ENCODE measurements at regions of chr5 and their contacts with region 1.

Region 1: GRCh38 chr5:160342403-160342941 is 28.0 kb downstream of the C1QTNF2 start:
- DNase-seq: no peak
- ATAC-seq: no peak
- H3K4me3 ChIP-seq: no peak overlapping the region
- H3K27ac ChIP-seq: peak overlapping the region in 1 of 2 experiments; percentile 39; a peak in 2 of 6 replicates
- H3K4me1 ChIP-seq: peaks cover 15% of the 10 kb centered on the region
- CTCF ChIP-seq: no peak
- EP300 ChIP-seq: no peak
- POLR2A ChIP-seq: no peak
- RAD21 ChIP-seq: no peak

Region 2: DNA sequence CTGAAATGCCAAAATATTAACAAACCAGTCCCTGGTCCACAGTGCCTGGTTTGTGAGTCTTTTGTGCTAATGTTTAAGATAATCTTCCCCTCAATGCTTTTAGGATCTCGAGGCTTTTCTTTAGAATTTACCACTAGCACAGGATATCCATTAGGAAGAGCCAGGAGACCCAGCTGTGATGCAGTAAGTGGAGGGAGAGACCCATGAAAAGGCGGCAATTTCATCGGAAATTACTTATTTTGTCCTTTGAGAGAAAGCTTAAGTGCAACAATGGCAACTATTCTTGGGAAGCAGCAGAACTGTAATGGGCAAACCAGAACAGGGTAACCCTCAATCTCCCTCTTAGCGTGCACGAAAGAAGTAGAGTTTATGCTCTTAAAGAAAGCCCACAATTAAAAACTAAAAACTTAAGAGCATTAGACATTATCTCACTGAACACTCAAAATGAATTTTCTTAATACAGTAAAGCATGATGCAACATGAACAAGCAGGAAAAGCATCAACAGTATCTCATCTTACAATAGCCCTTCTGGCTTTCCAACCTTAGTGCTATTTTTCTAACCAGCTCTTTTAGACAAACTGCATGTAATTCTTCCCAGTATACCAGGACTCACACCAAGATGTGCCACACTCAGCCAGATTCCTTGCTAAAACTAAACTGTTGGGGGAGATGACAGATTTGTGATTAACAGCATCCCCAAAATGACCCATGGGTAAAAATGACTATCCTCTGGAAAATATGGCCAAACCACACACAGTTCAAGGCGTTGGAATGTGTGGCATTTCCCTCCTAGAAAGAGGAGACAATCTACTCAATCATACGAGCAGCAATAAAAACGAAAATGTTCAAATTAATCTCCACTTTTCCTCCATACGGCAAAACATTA is 259.6 kb before region 1 on chr5:
- CTCF ChIA-PET with region 1: interaction called, 37 read pairs
- POLR2A ChIA-PET with region 1: no interaction called
- DNase-seq: peak in 1 of 2 experiments; percentile 42
- ATAC-seq: peak; percentile 33 to 78; a peak in 5 of 6 replicates
- H3K4me3 ChIP-seq: no peak overlapping the region
- H3K27ac ChIP-seq: peak overlapping the region; percentile 46 to 77
- H3K4me1 ChIP-seq: peaks cover 28% of the 10 kb centered on the region
- CTCF ChIP-seq: no peak
- EP300 ChIP-seq: no peak
- POLR2A ChIP-seq: no peak
- RAD21 ChIP-seq: no peak

Region 3: DNA sequence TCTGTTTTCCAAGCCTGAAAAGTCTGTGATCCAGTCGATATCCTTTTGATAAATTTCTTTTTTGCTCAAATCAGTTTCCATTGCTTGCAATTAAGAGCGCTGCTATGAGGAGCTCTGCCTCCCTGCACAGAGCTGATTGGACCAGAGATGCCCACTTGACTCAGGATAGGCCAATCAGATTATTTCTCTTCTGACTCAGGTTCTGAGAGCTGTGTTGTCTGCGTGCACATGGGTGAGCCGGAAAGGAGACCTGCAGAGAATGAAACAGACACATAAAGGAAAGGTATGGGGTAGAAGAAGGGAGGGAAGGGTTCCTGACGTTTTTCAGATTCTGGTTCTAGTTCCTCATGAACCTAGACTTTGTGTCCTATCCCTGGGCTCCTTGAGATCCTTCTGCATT is 128.9 kb before region 1 on chr5:
- CTCF ChIA-PET with region 1: interaction called, 26 read pairs
- POLR2A ChIA-PET with region 1: no interaction called
- DNase-seq: peak; percentile 13 to 48
- ATAC-seq: peak; percentile 73 to 90; a peak in 4 of 6 replicates
- H3K4me3 ChIP-seq: no peak overlapping the region
- H3K27ac ChIP-seq: no peak overlapping the region
- H3K4me1 ChIP-seq: no peaks in the 10 kb centered on the region
- CTCF ChIP-seq: no peak
- EP300 ChIP-seq: no peak
- POLR2A ChIP-seq: no peak
- RAD21 ChIP-seq: no peak

Region 4: DNA sequence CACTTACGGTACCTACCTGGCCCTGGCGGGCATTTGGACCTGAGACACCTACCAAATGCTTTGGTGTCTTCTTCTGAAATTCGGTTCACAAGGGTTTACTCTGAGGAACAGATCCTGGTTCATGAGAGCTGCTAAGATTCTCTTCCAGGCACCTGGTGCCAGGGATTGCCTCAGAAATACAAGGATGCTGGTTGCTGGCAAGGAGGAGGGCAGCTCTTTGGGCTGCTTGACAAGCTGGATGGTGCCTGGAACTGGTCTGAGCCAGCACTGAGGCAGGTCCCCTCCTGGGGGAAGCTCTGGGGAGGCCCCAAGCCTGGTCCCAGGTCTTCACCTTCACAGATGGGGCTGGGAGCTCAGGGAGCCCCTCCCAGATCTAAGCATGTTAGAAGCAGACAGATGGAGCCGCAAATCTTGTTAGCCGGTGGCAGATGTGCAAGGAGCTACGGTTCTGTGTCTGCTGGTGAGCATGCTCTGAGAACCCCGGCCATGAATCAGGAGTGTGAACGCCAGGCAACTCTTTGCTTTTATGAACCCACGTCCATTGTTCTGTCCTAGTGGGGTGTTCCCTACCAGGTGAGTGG is 96.9 kb before region 1 on chr5:
- CTCF ChIA-PET with region 1: interaction called, 128 read pairs
- POLR2A ChIA-PET with region 1: interaction called, 3 read pairs
- DNase-seq: no peak
- ATAC-seq: 0 out of 6 replicates have a peak, but pooled peaks of 1 of the 2 experiments have one; percentile 31
- H3K4me3 ChIP-seq: no peak overlapping the region
- H3K27ac ChIP-seq: no peak overlapping the region
- H3K4me1 ChIP-seq: no peaks in the 10 kb centered on the region
- CTCF ChIP-seq: no peak
- EP300 ChIP-seq: no peak
- POLR2A ChIP-seq: no peak
- RAD21 ChIP-seq: no peak

Region 5: DNA sequence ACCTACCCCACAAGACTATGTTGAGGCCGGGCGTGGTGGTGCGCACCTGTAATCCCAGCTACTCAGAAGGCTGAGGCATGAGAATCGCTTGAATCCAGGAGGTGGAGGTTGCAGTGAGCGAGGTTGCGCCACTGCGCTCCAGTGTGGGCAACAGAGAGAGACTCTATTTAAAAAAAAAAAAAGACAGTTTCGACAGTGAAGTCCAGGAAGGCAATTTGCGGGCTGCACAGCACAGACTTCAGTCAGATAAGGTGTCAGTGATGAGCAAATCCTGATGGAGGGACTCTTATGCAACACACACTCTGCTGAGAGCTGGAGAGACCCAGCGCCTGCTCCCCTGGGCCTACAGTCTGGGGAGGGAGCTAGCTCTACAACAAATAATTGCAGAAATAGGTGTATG is 44.3 kb before region 1 on chr5:
- CTCF ChIA-PET with region 1: interaction called, 11 read pairs
- POLR2A ChIA-PET with region 1: no interaction called
- DNase-seq: no peak
- ATAC-seq: no peak
- H3K4me3 ChIP-seq: no peak overlapping the region
- H3K27ac ChIP-seq: no peak overlapping the region
- H3K4me1 ChIP-seq: no peaks in the 10 kb centered on the region
- CTCF ChIP-seq: no peak
- EP300 ChIP-seq: no peak
- POLR2A ChIP-seq: no peak
- RAD21 ChIP-seq: no peak

Region 6: GRCh38 chr5:160357861-160358411 is 15.5 kb after region 1 on chr5:
- CTCF ChIA-PET with region 1: interaction called, 22 read pairs
- POLR2A ChIA-PET with region 1: no interaction called
- DNase-seq: no peak
- ATAC-seq: no peak
- H3K4me3 ChIP-seq: no peak overlapping the region
- H3K27ac ChIP-seq: no peak overlapping the region
- H3K4me1 ChIP-seq: no peaks in the 10 kb centered on the region
- CTCF ChIP-seq: no peak
- EP300 ChIP-seq: no peak
- POLR2A ChIP-seq: no peak
- RAD21 ChIP-seq: no peak

Region 7: DNA sequence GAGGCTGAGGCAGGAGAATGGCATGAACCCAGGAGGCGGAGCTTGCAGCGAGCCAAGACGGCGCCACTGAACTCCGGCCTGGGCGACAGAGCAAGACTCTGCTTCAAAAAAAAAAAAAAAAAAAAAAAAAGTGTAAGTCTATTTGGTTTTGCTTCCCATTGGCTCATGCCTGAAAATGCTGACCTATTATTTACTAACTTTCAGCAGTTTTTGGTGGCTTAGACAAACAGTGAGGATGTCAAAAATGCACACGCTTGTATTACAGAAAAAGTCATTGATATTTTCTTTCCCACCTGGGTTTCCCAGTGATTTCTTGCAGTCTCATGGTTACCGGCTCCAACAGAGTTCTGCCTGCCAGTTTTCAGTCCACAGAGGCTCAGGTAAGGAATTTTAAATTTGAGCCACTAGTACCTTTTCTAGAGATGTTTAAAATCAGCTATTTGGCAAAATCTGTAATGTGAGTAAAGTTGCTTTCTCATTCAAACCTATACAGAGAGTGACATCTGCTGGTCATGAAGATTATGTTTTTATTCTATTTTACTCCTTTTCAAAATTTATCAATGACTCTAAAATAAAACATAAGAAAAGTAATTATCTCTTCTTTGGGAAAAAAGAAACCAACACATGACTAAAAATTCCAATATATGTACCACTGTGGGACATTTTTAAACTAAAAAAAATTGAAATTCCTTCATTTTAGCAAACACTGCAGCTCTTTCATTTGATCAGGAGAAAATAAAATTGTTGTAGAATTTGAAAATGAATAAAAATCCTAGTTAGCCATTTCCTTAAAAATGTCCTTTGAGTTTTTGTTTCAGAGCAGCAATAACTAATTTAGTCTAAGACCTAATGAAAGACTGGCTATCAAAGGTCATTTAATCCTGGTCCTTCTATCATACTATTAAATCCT is 48.6 kb after region 1 on chr5:
- CTCF ChIA-PET with region 1: interaction called, 30 read pairs
- POLR2A ChIA-PET with region 1: no interaction called
- DNase-seq: peak in 1 of 2 experiments; percentile 32
- ATAC-seq: peak; percentile 47 to 69; a peak in 3 of 6 replicates
- H3K4me3 ChIP-seq: no peak overlapping the region
- H3K27ac ChIP-seq: no peak overlapping the region
- H3K4me1 ChIP-seq: no peaks in the 10 kb centered on the region
- CTCF ChIP-seq: peak; percentile 75
- EP300 ChIP-seq: no peak
- POLR2A ChIP-seq: no peak
- RAD21 ChIP-seq: peak; percentile 73 to 79

Measured in A549 (cell line).